ENCODE measurements at regions of chr5 and their contacts with region 1.

Region 1: DNA sequence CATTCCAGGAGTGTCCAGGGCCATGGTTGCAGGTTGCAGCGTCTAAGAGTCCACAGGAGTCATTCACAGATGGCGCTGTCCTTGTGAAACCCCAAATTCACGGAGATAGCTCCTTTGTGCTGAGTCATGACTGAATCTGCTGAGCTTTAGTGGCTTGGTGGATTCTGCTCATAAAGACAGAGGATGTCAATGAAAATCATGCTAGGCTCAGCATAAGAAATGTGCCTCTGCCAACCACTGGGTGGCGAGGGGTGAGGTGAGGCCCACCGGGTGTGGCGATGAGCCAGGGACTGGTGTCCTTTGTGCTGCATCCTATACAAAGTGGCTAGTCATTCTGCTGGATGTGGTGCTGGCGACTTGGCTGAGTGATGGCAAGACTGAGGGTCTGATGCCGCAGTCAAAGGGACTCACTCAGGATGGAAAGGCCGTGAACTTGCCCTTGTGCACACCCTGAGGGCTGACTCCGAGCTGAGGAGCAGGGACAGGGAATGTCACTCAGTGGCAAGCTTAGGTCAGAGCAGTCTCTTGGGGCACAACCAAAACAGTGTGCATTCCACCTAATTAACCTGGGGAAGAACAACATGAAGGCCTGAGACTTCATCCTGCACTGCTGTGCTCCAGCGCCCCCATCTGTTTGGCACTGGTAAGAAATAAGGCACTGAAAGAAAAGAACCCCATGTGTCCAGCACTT is 71.5 kb downstream of the DAP start:
- DNase-seq: no peak
- ATAC-seq: peak in 6 of 8 donors; percentile 11 to 37 (median 25)
- H3K4me3 ChIP-seq: no peak overlapping the region
- H3K27ac ChIP-seq: no peak overlapping the region
- H3K4me1 ChIP-seq: peaks cover 0 to 8% (median 0%) of the 10 kb centered on the region in 9 donors
- H3K27me3 ChIP-seq: no peaks in the 10 kb centered on the region
- CTCF ChIP-seq: peak in 5 of 9 donors; percentile 22 to 41 (median 29)

Region 2: DNA sequence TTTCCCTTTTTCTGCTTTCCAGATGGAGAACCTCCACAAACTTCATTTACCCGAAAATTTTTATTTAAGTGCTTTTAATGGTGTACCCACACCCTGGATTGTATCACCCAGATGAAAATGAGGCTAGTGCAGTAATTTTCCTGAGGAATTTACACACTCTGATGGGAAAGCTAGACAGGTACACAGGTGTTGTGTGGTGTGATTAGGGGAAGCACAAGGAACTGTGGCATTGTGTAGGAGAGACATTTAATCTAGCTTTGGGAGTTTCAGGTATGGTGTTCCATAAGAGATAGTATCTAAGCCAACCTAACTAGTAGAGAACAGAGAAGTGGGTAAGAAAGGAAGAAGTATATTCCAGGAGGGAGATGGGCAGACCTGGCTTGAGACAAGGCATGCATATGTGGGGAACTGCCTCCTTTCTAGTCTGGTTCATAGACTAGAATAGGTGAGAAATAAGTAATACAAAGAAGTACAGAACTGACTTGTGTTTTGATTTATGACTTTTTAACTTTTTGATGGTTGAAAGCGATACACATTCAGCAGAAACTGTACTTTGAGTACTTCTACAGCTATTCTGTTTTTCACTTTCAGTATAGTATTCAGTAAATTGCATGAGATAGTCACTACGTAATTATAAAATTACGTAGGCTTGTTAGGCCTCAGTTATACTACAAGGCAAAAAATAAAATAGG is 270.7 kb before region 1 on chr5:
- intact Hi-C with region 1: no loop called
- DNase-seq: no peak
- ATAC-seq: no peak
- H3K4me3 ChIP-seq: no peak overlapping the region
- H3K27ac ChIP-seq: no peak overlapping the region
- H3K4me1 ChIP-seq: peaks cover 0 to 24% (median 0%) of the 10 kb centered on the region in 9 donors
- H3K27me3 ChIP-seq: no peaks in the 10 kb centered on the region
- CTCF ChIP-seq: no peak

Region 3: DNA sequence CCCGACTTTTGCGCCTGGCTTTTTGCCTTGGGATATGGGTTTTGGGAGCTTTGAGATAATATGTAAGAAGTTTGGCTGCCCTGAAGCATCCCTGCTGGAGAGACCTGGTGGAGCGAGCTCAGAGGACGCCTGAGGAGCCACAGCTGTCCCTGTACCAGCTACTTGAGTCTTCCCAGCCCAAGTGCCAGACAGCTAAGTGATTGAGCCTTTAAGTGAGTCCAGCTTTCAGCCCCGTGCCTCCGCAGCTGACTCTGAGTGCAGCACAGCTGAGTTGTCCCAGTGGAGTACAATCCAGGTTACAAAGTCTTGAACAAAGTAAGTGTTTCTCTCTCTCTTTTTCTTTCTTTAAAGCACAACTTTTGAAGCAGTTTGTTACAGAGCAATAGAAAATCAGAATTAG is 275.3 kb after region 1 on chr5:
- intact Hi-C with region 1: loop called in 1 of 10 experiments (anchors 10 kb)
- DNase-seq: no peak
- ATAC-seq: no peak
- H3K4me3 ChIP-seq: no peak overlapping the region
- H3K27ac ChIP-seq: no peak overlapping the region
- H3K4me1 ChIP-seq: no peaks in the 10 kb centered on the region
- H3K27me3 ChIP-seq: peaks cover 0 to 5% (median 0%) of the 10 kb centered on the region in 7 donors
- CTCF ChIP-seq: no peak

Region 4: GRCh38 chr5:11897781-11898180 is 1208.2 kb after region 1 on chr5:
- intact Hi-C with region 1: no loop called
- DNase-seq: no peak
- ATAC-seq: no peak
- H3K4me3 ChIP-seq: no peak overlapping the region
- H3K27ac ChIP-seq: no peak overlapping the region
- H3K4me1 ChIP-seq: no peaks in the 10 kb centered on the region
- H3K27me3 ChIP-seq: peaks cover 0 to 15% (median 12%) of the 10 kb centered on the region in 7 donors
- CTCF ChIP-seq: no peak

Measured in heart right ventricle (tissue), 16 donors.